Calu3 (cell line): ENCODE measurements at regions of chr15 and their contacts with region 1.

Region 1: GRCh38 chr15:99704444-99704838 is 28.8 kb downstream of the LYSMD4 start:
- DNase-seq: peak; percentile 64
- H3K4me3 Mint-ChIP-seq: no peak overlapping the region
- H3K27ac Mint-ChIP-seq: peak overlapping the region; percentile 98
- H3K4me1 Mint-ChIP-seq: peaks cover 40% of the 10 kb centered on the region
- H3K27me3 Mint-ChIP-seq: no peaks in the 10 kb centered on the region
- CTCF ChIP-seq: no peak

Region 2: GRCh38 chr15:99275525-99276128 is 428.8 kb before region 1 on chr15:
- CTCF ChIA-PET with region 1: interaction called, 42 read pairs
- intact Hi-C with region 1: loop called (anchors 1 kb)
- DNase-seq: no peak
- H3K4me3 Mint-ChIP-seq: no peak overlapping the region
- H3K27ac Mint-ChIP-seq: no peak overlapping the region
- H3K4me1 Mint-ChIP-seq: no peaks in the 10 kb centered on the region
- H3K27me3 Mint-ChIP-seq: no peaks in the 10 kb centered on the region
- CTCF ChIP-seq: no peak

Region 3: GRCh38 chr15:99409097-99409473 is 295.4 kb before region 1 on chr15:
- CTCF ChIA-PET with region 1: interaction called, 55 read pairs
- intact Hi-C with region 1: loop called (anchors 1 kb)
- DNase-seq: peak; percentile 71
- H3K4me3 Mint-ChIP-seq: no peak overlapping the region
- H3K27ac Mint-ChIP-seq: no peak overlapping the region
- H3K4me1 Mint-ChIP-seq: no peaks in the 10 kb centered on the region
- H3K27me3 Mint-ChIP-seq: no peaks in the 10 kb centered on the region
- CTCF ChIP-seq: peak; percentile 59

Region 4: GRCh38 chr15:99565299-99566156 is 138.9 kb before region 1 on chr15 and contains the start of gene MEF2A:
- CTCF ChIA-PET with region 1: interaction called, 22 read pairs
- intact Hi-C with region 1: loop called (anchors 5 kb)
- DNase-seq: peak; percentile 97
- H3K4me3 Mint-ChIP-seq: peak within 1 kb of the TSS; percentile 93
- H3K27ac Mint-ChIP-seq: peak within 1 kb of the TSS; percentile 97
- H3K4me1 Mint-ChIP-seq: peaks cover 16% of the 10 kb centered on the region
- H3K27me3 Mint-ChIP-seq: peaks cover 39% of the 10 kb centered on the region
- CTCF ChIP-seq: no peak
- total RNA-seq, gene MEF2A: 33.6 and 35.0 TPM in 2 replicates

Region 5: DNA sequence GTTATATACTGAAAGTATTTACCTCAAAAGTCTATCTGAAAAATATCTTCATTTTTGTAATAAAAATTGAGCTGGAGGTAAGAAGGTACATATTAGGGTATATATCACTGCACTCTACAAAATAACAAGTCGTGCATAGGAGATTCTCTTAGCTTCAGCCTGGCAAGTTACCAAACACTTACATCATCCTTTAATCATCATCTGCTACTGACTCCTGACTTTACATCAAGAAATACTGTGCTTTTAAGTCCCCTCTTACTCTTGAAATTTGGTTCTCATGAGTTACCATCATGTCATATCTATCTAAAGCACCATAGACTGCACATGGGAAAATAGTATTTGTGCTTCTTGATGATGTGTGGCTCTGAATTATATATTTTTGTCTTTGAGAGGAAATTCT is 22.0 kb before region 1 on chr15:
- CTCF ChIA-PET with region 1: no interaction called
- intact Hi-C with region 1: no loop called
- DNase-seq: no peak
- H3K4me3 Mint-ChIP-seq: no peak overlapping the region
- H3K27ac Mint-ChIP-seq: no peak overlapping the region
- H3K4me1 Mint-ChIP-seq: no peaks in the 10 kb centered on the region
- H3K27me3 Mint-ChIP-seq: no peaks in the 10 kb centered on the region
- CTCF ChIP-seq: no peak

Region 6: DNA sequence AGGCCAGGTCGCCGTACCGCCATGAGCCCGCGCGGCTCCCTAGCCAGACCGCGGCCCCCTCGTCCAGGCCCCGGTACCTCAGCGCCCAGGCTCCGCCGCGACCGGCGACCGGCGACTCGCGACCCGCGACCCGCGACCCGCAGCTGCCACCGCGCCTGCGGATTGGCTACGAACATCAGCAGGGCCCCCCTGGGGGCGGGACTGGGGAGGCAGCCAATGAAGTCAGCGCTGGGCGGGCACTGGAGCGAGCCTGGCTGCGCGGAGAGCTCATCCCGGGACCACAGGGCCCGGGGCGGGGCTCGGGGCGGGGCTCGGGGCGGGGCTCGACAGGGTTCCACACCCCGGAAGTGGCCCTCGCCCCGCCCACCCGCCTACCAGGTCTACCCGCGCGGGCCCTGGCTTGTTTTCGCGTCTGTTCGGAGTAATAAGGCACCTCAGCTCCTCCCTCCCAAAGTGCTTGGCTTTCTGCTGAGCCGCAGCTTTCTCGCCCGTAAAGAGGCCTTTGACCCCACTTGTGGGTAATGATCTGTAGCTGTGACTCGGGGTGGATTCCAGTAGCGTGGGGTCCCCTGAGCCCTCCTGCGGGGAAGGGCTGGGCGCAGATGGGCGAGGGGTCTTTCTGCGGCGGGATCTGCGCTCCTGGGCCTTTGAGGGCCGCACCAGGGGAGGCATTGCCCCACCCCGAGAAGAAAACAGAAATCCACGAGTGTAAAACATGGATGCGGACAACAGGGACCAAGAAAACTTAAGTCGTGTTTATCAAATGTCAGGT is 29.0 kb after region 1 on chr15 and contains the start of gene LYSMD4:
- CTCF ChIA-PET with region 1: interaction called, 17 read pairs
- intact Hi-C with region 1: loop called (anchors 1 kb)
- DNase-seq: peak; percentile 99
- H3K4me3 Mint-ChIP-seq: peak within 1 kb of the TSS; percentile 73
- H3K27ac Mint-ChIP-seq: no peak within 1 kb of the TSS
- H3K4me1 Mint-ChIP-seq: peaks cover 7% of the 10 kb centered on the region
- H3K27me3 Mint-ChIP-seq: no peaks in the 10 kb centered on the region
- CTCF ChIP-seq: no peak
- total RNA-seq, gene LYSMD4: 6.6 and 8.2 TPM in 2 replicates